PC-9 (cell line): ENCODE measurements at regions of chr4 and their contacts with region 1.

Region 1: GRCh38 chr4:30314001-30314400 is 406.2 kb upstream of the PCDH7 start:
- DNase-seq: no peak
- H3K4me3 ChIP-seq: no peak overlapping the region
- H3K27ac ChIP-seq: no peak overlapping the region
- H3K4me1 ChIP-seq: no peaks in the 10 kb centered on the region
- H3K27me3 ChIP-seq: no peaks in the 10 kb centered on the region
- CTCF ChIP-seq: no peak

Region 2: GRCh38 chr4:30903502-30904217 is 589.7 kb after region 1 on chr4:
- CTCF ChIA-PET with region 1: no interaction called
- POLR2A ChIA-PET with region 1: no interaction called
- intact Hi-C with region 1: no loop called
- DNase-seq: peak in 1 of 2 experiments; percentile 36
- H3K4me3 ChIP-seq: no peak overlapping the region
- H3K27ac ChIP-seq: no peak overlapping the region
- H3K4me1 ChIP-seq: peaks cover 7% of the 10 kb centered on the region
- H3K27me3 ChIP-seq: no peaks in the 10 kb centered on the region
- CTCF ChIP-seq: no peak

Region 3: GRCh38 chr4:31674313-31674947 is 1360.4 kb after region 1 on chr4:
- CTCF ChIA-PET with region 1: no interaction called
- POLR2A ChIA-PET with region 1: interaction called, 11 read pairs
- intact Hi-C with region 1: no loop called
- DNase-seq: no peak
- H3K4me3 ChIP-seq: no peak overlapping the region
- H3K27ac ChIP-seq: no peak overlapping the region
- H3K4me1 ChIP-seq: no peaks in the 10 kb centered on the region
- H3K27me3 ChIP-seq: no peaks in the 10 kb centered on the region
- CTCF ChIP-seq: peak; percentile 66